Activated CD4-positive, alpha-beta memory T cell treated with anti-CD3 and anti-CD28 coated beads for 36 hours (primary cell): ENCODE measurements at regions of chr7 and their contacts with region 1.

Region 1: DNA sequence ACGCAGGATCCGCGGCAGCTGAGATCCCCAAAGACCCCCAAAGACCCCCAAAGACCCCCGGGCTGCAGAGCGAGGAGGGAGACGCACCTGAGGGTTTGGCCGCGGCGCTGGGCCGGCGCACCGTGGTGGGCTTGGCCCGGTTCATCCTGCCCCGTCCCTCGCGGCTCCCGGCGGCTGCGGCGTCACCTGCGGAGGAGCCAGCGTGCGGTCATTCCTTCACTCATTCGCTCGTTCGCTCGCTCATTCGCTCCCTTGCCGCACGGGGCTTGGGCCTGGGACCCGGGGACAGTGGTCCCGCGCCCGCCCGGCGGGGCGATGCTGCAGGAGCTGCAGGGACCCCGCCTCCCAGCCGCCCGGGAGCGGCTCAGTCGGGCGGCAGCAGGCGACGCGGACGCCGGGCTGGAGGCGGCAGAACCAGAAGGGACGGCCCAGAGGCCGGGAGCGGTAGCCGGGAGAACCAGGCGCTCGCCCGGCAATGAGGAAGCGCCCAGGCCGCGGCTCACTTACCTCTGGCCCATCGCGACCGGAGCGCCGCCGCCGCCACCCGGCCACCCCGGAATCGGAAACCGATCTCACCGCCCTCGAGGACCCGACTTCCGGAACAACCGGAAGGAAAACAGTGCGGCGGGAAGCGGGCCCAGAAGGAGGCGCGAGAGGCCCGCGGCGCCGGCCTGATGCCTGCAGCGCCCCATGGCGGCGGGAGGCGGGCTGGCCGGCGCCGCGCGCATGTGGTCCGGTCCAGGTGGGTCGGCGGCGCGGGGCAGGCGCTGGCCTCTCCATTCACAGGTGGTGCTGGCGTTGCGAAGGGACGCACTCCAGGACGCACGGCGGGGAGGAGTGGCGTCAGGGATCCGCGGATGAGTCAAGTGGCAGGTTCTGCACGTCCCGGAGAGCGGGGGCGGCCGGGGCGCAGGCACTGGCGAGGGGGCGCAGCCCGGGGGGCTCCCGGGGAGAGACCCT is at the start of gene INTS1:
- DNase-seq: peak; percentile 93
- H3K4me3 Mint-ChIP-seq: peak within 1 kb of the TSS; percentile 91
- H3K27ac Mint-ChIP-seq: peak within 1 kb of the TSS; percentile 80
- H3K4me1 Mint-ChIP-seq: peaks cover 30% of the 10 kb centered on the region
- H3K27me3 Mint-ChIP-seq: no peaks in the 10 kb centered on the region
- total RNA-seq, gene INTS1: 86.4 to 92.5 TPM

Region 2: DNA sequence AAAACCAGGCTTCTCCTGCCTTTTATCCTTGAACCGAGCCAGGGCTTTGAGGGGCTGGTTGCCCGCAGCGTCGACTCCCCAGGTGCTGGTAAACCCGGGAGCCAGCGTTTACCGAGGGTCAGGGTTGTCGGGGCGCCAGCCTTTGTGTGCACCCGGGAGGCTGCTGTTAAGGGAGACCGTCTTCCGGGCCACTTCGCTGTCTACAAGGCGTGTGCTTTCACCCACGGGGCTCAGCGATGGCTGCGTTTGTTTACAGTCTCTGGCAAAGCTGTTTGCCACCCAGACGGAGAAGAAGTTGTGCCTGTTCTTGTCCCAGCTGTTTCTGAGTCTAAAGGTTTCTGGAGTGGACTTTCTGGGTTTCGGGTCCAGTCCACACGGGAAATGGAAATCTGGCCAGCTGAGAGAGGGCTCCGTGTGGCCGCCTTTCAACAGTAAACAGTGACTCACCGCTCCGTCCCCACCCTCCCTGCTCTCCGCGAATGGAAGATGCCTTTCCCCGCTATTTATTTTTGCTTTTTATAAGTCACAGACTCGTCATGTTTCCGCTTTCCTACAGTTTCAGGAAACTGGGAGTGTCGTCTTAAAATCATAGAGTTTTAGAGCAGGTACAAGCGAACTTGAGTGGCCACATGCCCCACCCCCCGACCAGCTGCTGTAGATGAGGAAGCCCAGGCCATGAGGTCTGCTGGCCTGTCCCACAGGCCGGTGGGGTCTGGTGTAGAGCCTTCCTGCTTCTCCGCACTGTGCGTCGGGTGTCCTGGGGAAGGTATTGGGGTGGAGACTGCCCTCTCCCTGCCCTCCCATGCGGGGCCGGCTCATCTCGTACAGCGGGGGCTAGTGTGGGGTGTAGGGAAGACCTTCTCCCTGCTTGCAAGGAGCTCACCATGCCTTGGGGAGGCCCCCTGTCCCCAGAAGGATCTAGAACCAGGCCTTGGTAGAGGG is 28.7 kb after region 1 on chr7:
- CTCF ChIA-PET with region 1: no interaction called
- POLR2A ChIA-PET with region 1: interaction called, 3 read pairs
- intact Hi-C with region 1: loop called (anchors 1 kb)
- DNase-seq: peak; percentile 77
- H3K4me3 Mint-ChIP-seq: peak overlapping the region; percentile 81
- H3K27ac Mint-ChIP-seq: peak overlapping the region; percentile 82
- H3K4me1 Mint-ChIP-seq: peaks cover 26% of the 10 kb centered on the region
- H3K27me3 Mint-ChIP-seq: no peaks in the 10 kb centered on the region